Activated T-helper 2 cell treated with anti-CD3 and anti-CD28 coated beads, Interferon-gamma antibody, Interleukin-2, Interleukin-4, amounts not matched to agents 10 μg/mL and 5 μg/mL and 100 μg/mL, durations not matched to agents 14 hours and 24 hours and 36 hours (primary cell): ENCODE measurements at regions of chr17 and their contacts with region 1.

Region 1: DNA sequence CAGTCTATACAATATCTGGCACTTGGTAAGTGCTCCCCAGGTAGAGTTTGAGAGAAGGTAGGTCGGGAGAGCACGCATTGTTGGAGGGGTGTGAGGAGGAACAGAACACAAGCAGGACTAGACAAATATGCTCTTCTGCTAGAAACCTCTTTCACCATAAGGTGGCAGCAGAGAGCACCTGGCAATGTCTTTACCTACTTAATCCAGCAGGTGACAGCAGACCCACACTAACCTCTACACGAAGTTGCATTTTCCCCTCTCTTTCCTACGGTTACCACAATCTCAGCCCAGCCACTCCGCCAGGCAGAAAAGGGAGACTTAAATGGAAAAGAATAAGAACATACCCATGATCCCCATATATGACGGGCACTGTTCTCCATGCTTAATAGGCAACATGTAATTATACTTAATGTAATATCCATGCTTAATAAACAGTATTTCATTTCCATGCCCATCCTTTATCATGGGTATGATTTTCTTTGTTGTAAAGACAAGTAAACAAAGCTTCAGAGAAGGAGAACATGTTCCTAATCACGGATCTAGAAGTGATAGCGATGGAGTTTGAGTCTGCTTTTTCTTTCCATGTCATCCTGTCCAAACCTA is 55.1 kb upstream of the CCL2 start:
- DNase-seq: peak; percentile 61
- H3K4me3 Mint-ChIP-seq: no peak overlapping the region
- H3K27ac Mint-ChIP-seq: no peak overlapping the region
- H3K4me1 Mint-ChIP-seq: peaks cover 21% of the 10 kb centered on the region
- H3K27me3 Mint-ChIP-seq: peaks cover 40% of the 10 kb centered on the region

Region 2: DNA sequence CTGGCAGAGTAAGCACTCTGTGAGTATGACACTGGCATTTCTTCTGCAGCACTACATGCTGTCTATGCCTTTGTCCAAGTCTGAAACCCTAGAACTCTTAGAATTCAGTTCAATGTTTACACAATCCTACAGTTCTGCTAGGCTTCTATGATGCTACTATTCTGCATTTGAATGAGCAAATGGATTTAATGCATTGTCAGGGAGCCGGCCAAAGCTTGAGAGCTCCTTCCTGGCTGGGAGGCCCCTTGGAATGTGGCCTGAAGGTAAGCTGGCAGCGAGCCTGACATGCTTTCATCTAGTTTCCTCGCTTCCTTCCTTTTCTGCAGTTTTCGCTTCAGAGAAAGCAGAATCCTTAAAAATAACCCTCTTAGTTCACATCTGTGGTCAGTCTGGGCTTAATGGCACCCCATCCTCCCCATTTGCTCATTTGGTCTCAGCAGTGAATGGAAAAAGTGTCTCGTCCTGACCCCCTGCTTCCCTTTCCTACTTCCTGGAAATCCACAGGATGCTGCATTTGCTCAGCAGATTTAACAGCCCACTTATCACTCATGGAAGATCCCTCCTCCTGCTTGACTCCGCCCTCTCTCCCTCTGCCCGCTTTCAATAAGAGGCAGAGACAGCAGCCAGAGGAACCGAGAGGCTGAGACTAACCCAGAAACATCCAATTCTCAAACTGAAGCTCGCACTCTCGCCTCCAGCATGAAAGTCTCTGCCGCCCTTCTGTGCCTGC is 54.8 kb after region 1 on chr17 and contains the start of gene CCL2:
- intact Hi-C with region 1: loop called (anchors 5 kb)
- DNase-seq: no peak
- H3K4me3 Mint-ChIP-seq: no peak within 1 kb of the TSS
- H3K27ac Mint-ChIP-seq: no peak within 1 kb of the TSS
- H3K4me1 Mint-ChIP-seq: peaks cover 4% of the 10 kb centered on the region
- H3K27me3 Mint-ChIP-seq: peaks cover 50% of the 10 kb centered on the region
- total RNA-seq, gene CCL2: not detected in 2 replicates

Region 3: GRCh38 chr17:34361478-34362061 is 161.5 kb after region 1 on chr17:
- intact Hi-C with region 1: loop called (anchors 1 kb)
- DNase-seq: peak; percentile 72
- H3K4me3 Mint-ChIP-seq: peak overlapping the region; percentile 41
- H3K27ac Mint-ChIP-seq: no peak overlapping the region
- H3K4me1 Mint-ChIP-seq: peaks cover 53% of the 10 kb centered on the region
- H3K27me3 Mint-ChIP-seq: peaks cover 13% of the 10 kb centered on the region

Region 4: DNA sequence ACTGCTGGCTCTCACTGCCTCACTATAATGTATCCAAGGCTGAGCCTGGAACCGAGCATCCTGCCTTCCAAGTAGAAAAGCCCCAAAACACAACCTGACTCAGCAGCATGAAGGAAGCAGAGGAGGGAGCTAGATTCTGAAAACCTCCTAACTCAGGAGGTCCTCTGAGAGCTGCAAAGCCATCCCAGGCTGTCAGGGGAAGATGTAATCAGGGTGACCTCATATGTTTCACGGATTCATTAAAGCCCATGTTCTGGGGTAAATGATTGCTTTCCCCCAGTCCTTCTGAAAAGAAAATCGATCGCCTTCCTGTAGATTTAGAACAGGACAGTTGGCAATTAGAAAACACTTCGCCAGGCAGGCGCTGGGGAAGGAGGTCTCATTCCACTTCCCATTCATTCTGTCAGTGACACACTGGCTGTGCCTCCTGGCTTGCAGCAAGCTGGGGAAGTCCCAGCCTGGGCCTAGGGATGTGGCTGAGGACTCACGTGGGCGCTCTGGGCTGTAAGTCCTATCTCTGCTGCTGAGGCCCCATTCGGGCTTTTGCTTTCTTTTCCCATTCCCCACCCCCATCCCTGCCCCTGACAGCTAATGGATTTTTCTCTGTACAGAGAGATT is 303.6 kb after region 1 on chr17:
- intact Hi-C with region 1: loop called (anchors 5 kb)
- DNase-seq: no peak
- H3K4me3 Mint-ChIP-seq: no peak overlapping the region
- H3K27ac Mint-ChIP-seq: no peak overlapping the region
- H3K4me1 Mint-ChIP-seq: peaks cover 26% of the 10 kb centered on the region
- H3K27me3 Mint-ChIP-seq: peaks cover 26% of the 10 kb centered on the region

Region 5: DNA sequence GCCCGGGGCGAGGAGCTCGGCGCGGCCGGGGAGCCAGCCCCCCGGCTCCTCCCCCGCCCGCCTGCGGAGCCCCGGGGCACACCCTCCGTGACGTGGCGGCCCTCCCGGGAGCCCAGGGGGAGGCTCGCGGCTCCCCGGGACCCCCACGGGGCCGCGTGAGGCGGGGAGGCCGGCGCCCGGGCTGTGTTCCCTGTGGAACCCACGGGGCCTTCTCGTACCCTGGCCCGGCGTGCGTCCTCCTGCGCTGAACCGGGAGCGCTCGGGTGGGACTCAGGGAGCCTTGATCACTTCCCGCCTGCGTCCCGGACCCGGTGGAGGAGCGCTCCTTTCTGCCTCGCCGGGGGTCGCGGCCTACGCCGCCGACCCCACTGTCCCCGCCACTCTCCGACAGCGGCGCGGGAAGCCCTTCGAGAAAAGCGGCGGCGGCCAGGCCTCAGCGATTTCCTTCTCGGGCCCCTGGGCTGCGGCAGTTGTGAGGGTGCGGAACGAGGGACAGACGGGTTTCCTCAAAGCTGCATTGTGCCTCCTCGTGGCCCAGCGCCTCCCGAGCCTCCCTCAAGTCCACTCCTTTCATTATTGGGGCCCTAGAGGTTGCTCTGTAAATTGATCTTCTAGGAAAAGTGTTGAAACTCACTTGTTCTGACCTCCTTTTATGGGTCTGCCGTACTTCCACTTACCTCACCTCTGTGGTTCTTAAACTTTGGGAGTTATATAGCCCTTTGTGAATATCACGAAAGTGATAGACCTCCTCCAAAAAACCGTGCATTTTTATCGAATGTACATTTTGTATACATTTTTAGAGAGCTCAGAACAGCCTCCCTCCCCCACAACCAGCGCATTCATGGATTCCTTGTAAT is 780.9 kb after region 1 on chr17:
- intact Hi-C with region 1: loop called (anchors 5 kb)
- DNase-seq: peak; percentile 74
- H3K4me3 Mint-ChIP-seq: peak overlapping the region; percentile 94
- H3K27ac Mint-ChIP-seq: peak overlapping the region; percentile 96
- H3K4me1 Mint-ChIP-seq: peaks cover 39% of the 10 kb centered on the region
- H3K27me3 Mint-ChIP-seq: no peaks in the 10 kb centered on the region